Activated CD4-positive, alpha-beta T cell treated with anti-CD3 and anti-CD28 coated beads for 36 hours (primary cell): ENCODE measurements at regions of chr1 and their contacts with region 1.

Region 1: GRCh38 chr1:93129507-93130099 is 50.5 kb downstream of the MTF2 start:
- DNase-seq: no peak
- ATAC-seq: no peak
- H3K4me3 Mint-ChIP-seq: no peak overlapping the region
- H3K27ac Mint-ChIP-seq: no peak overlapping the region
- H3K4me1 Mint-ChIP-seq: peaks cover 2% of the 10 kb centered on the region
- H3K27me3 Mint-ChIP-seq: no peaks in the 10 kb centered on the region

Region 2: GRCh38 chr1:93033785-93034184 is 95.8 kb before region 1 on chr1:
- CTCF ChIA-PET with region 1: no interaction called
- POLR2A ChIA-PET with region 1: no interaction called
- intact Hi-C with region 1: no loop called
- DNase-seq: no peak
- ATAC-seq: peak; percentile 74
- H3K4me3 Mint-ChIP-seq: no peak overlapping the region
- H3K27ac Mint-ChIP-seq: no peak overlapping the region
- H3K4me1 Mint-ChIP-seq: peaks cover 34% of the 10 kb centered on the region
- H3K27me3 Mint-ChIP-seq: no peaks in the 10 kb centered on the region

Region 3: DNA sequence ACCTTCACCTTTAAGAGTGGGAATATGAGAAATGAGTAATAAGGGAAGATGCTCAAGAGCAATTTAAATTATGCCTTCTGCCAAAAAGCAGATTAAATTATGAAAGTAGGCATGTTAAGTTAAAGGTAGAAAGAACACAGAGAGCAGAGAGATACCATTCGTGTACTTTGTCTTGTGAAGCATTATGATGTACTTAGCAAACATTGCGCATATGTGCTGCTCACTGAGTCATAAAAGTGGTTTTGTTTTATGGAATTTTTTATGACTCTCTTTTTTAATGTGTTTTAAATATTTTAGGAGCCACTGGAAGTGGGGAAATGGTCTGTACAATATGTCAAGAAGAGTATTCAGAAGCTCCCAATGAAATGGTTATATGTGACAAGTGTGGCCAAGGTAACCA is 15.2 kb before region 1 on chr1:
- CTCF ChIA-PET with region 1: interaction called, 5 read pairs
- POLR2A ChIA-PET with region 1: no interaction called
- intact Hi-C with region 1: loop called in 1 of 2 experiments (anchors 2 kb)
- DNase-seq: no peak
- ATAC-seq: no peak
- H3K4me3 Mint-ChIP-seq: no peak overlapping the region
- H3K27ac Mint-ChIP-seq: no peak overlapping the region
- H3K4me1 Mint-ChIP-seq: peaks cover 23% of the 10 kb centered on the region
- H3K27me3 Mint-ChIP-seq: no peaks in the 10 kb centered on the region

Region 4: DNA sequence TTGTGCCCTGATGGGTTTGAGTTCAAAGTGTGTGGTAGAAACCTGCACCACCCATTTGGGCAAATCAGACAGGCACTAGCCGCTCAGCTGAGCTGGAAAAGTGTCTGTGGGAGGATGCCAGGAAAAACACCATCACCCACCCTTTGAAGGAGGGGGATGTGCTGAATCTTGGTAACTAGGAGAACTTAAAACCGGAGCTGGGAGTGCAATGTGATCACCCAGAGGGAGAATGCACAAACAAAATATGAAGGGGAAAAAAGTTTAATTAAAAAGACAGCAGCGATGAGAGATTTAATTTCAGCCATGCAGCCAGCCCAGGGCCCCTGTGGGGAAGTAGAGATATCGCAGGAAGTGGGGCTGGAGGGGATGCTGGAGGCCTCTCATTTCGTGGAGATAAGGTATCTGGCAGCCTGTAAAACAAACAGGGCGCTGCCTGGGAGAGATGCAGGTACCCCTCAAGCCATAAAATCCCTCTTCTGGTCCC is 638.8 kb after region 1 on chr1:
- CTCF ChIA-PET with region 1: no interaction called
- POLR2A ChIA-PET with region 1: no interaction called
- intact Hi-C with region 1: no loop called
- DNase-seq: no peak
- ATAC-seq: no peak
- H3K4me3 Mint-ChIP-seq: no peak overlapping the region
- H3K27ac Mint-ChIP-seq: no peak overlapping the region
- H3K4me1 Mint-ChIP-seq: peaks cover 19% of the 10 kb centered on the region
- H3K27me3 Mint-ChIP-seq: no peaks in the 10 kb centered on the region